Right lobe of liver (tissue), 6 donors: ENCODE measurements at regions of chr13 and their contacts with region 1.

Region 1: GRCh38 chr13:48580185-48580803 is 47.4 kb upstream of the RCBTB2 start:
- DNase-seq: peak in 1 of 3 donors; percentile 68
- ATAC-seq: peak; percentile 75 to 83 (median 78)
- H3K4me3 ChIP-seq: no peak overlapping the region
- H3K27ac ChIP-seq: peak overlapping the region in 1 of 3 donors; percentile 29
- H3K4me1 ChIP-seq: peaks cover 0 to 8% (median 0%) of the 10 kb centered on the region in 4 donors
- H3K27me3 ChIP-seq: no peaks in the 10 kb centered on the region
- CTCF ChIP-seq: peak; percentile 68 to 78 (median 74)
- POLR2A ChIP-seq: no peak

Region 2: GRCh38 chr13:48121733-48122132 is 458.6 kb before region 1 on chr13:
- intact Hi-C with region 1: loop called in 1 of 2 experiments (anchors 5 kb)
- DNase-seq: no peak
- ATAC-seq: no peak
- H3K4me3 ChIP-seq: no peak overlapping the region
- H3K27ac ChIP-seq: no peak overlapping the region
- H3K4me1 ChIP-seq: peaks cover 0 to 11% (median 4%) of the 10 kb centered on the region in 4 donors
- H3K27me3 ChIP-seq: no peaks in the 10 kb centered on the region
- CTCF ChIP-seq: no peak
- POLR2A ChIP-seq: no peak

Region 3: DNA sequence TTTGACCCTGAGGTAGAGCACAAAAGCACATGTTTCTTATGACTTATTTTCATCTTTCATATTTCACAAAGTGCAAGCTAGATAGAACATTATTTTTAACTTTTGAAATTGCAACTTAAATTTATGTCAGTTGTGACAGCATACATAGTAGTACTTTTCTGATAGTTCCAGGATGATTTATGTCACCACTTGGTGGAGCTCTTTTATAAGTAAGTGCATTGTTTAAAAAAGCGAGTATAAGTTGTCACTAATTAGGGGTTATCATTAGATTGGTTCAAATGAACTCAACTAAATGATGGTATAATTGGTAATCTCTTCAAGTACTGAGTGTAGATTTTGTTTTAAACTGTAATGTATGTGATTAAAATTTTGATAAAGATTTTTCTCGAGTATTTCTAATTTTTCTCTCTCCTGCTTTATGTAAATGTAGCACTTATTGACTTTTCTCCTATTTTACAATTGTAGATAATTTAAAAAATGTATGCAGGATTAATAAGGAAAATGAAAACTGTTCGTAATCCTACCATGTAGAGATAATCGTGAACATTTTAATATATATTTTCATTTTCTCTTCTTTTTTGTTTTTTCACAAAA is 245.7 kb before region 1 on chr13:
- intact Hi-C with region 1: loop called (anchors 10 kb)
- DNase-seq: no peak
- ATAC-seq: peak; percentile 66 to 79 (median 72)
- H3K4me3 ChIP-seq: no peak overlapping the region
- H3K27ac ChIP-seq: no peak overlapping the region
- H3K4me1 ChIP-seq: no peaks in the 10 kb centered on the region
- H3K27me3 ChIP-seq: no peaks in the 10 kb centered on the region
- CTCF ChIP-seq: peak; percentile 67 to 71 (median 69)
- POLR2A ChIP-seq: no peak

Region 4: GRCh38 chr13:48783181-48783630 is 202.9 kb after region 1 on chr13:
- intact Hi-C with region 1: no loop called
- DNase-seq: peak; percentile 76 to 88 (median 84)
- ATAC-seq: peak; percentile 85 to 92 (median 86)
- H3K4me3 ChIP-seq: no peak overlapping the region
- H3K27ac ChIP-seq: peak overlapping the region in 2 of 3 donors; percentile 36 to 81
- H3K4me1 ChIP-seq: peaks cover 0 to 17% (median 2%) of the 10 kb centered on the region in 4 donors
- H3K27me3 ChIP-seq: no peaks in the 10 kb centered on the region
- CTCF ChIP-seq: peak in 2 of 4 donors; percentile 8 to 9
- POLR2A ChIP-seq: peak; percentile 21